HEK293 (cell line): ENCODE measurements at regions of chr10 and their contacts with region 1.

Region 1: DNA sequence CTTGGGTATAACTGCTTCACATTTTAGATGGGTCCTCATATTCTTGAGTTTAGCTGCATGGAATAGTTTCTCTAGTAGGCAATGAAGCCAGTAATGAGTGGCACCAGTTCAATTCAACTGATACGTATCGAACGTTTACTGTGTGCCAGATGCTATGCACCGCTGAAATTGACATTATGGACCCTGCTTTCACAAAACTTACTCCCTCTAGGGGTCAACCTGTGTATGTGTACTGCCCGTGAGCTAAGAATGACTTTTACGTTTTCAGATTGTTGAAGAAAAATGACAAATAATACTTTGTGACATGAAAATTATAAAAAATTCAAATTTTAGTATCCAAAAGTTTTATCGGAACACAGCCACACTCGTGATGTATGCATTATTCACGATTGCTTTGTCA is 95.5 kb downstream of the ZMYND11 start:
- H3K4me3 ChIP-seq: no peak overlapping the region
- H3K27ac ChIP-seq: no peak overlapping the region
- H3K4me1 ChIP-seq: peaks cover 4% of the 10 kb centered on the region; the same call in 1 of the 2 replicates
- CTCF ChIP-seq: no peak

Region 2: DNA sequence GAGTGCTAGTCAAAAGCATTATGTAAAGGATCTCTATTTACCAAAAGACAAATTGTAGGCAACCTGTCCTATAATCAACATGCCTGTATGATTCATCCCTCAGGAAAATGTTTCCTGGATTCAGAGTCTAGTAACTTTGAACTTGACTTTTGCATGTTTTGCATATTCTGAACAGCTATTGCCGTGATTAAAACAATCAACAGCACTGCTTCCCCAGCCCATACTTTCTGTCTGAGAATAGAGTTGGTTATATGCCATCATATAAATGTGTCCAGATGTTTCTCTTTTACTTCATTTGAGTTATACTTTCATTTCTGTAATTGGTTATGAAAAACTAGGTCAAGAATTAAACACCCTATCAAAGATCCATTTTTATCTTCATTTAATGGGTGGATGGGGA is 11.9 kb before region 1 on chr10:
- CTCF ChIA-PET with region 1: interaction called, 11 read pairs
- POLR2A ChIA-PET with region 1: no interaction called
- H3K4me3 ChIP-seq: no peak overlapping the region
- H3K27ac ChIP-seq: no peak overlapping the region
- H3K4me1 ChIP-seq: 0 out of 2 replicates have a peak, but pooled peaks cover 4% of the 10 kb centered on the region
- CTCF ChIP-seq: no peak

Region 3: DNA sequence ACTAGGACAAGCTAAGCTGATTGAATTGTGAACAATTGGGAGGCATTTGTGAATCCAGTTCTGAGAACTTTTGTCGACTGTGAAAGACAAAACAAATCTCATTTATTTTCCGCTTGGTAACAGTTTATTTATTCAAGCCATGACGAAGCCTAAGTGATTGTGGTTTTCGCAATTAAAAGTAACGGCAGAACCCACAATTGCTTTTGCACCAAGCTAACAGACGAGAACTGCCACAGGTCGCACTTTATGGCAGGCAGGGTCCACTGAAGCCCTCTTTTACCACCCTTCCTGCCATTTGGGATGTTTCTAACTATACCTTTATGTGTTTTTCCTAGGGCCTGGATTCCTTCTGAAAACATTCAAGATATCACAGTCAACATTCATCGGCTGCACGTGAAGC is 15.7 kb after region 1 on chr10:
- CTCF ChIA-PET with region 1: no interaction called
- POLR2A ChIA-PET with region 1: no interaction called
- H3K4me3 ChIP-seq: no peak overlapping the region
- H3K27ac ChIP-seq: no peak overlapping the region
- H3K4me1 ChIP-seq: no peaks in the 10 kb centered on the region
- CTCF ChIP-seq: no peak